Activated CD8-positive, alpha-beta T cell treated with anti-CD3 and anti-CD28 coated beads, Interleukin-2, amount 10 ng/mL, durations not matched to agents 7 days and 5 days (primary cell): ENCODE measurements at regions of chr18 and their contacts with region 1.

Region 1: GRCh38 chr18:3062798-3063680 is 50.1 kb upstream of the LPIN2 start:
- DNase-seq: peak; percentile 83
- ATAC-seq: peak; percentile 48
- H3K4me3 Mint-ChIP-seq: peak overlapping the region; percentile 17
- H3K27ac Mint-ChIP-seq: peak overlapping the region; percentile 95
- H3K4me1 Mint-ChIP-seq: peaks cover 67% of the 10 kb centered on the region
- H3K27me3 Mint-ChIP-seq: no peaks in the 10 kb centered on the region

Region 2: GRCh38 chr18:2923464-2923863 is 139.6 kb before region 1 on chr18:
- CTCF ChIA-PET with region 1: interaction called, 17 read pairs
- POLR2A ChIA-PET with region 1: no interaction called
- DNase-seq: no peak
- ATAC-seq: no peak
- H3K4me3 Mint-ChIP-seq: no peak overlapping the region
- H3K27ac Mint-ChIP-seq: no peak overlapping the region
- H3K4me1 Mint-ChIP-seq: no peaks in the 10 kb centered on the region
- H3K27me3 Mint-ChIP-seq: no peaks in the 10 kb centered on the region

Region 3: GRCh38 chr18:2958819-2959298 is 104.2 kb before region 1 on chr18:
- CTCF ChIA-PET with region 1: interaction called, 37 read pairs
- POLR2A ChIA-PET with region 1: interaction called, 3 read pairs
- DNase-seq: peak; percentile 78
- ATAC-seq: peak; percentile 56
- H3K4me3 Mint-ChIP-seq: peak overlapping the region; percentile 72
- H3K27ac Mint-ChIP-seq: peak overlapping the region; percentile 95
- H3K4me1 Mint-ChIP-seq: peaks cover 89% of the 10 kb centered on the region
- H3K27me3 Mint-ChIP-seq: no peaks in the 10 kb centered on the region

Region 4: GRCh38 chr18:2994603-2995432 is 68.2 kb before region 1 on chr18:
- CTCF ChIA-PET with region 1: interaction called, 311 read pairs
- POLR2A ChIA-PET with region 1: interaction called, 36 read pairs
- DNase-seq: peak; percentile 79
- ATAC-seq: peak; percentile 77
- H3K4me3 Mint-ChIP-seq: peak overlapping the region; percentile 46
- H3K27ac Mint-ChIP-seq: peak overlapping the region; percentile 57
- H3K4me1 Mint-ChIP-seq: peaks cover 77% of the 10 kb centered on the region
- H3K27me3 Mint-ChIP-seq: no peaks in the 10 kb centered on the region

Region 5: DNA sequence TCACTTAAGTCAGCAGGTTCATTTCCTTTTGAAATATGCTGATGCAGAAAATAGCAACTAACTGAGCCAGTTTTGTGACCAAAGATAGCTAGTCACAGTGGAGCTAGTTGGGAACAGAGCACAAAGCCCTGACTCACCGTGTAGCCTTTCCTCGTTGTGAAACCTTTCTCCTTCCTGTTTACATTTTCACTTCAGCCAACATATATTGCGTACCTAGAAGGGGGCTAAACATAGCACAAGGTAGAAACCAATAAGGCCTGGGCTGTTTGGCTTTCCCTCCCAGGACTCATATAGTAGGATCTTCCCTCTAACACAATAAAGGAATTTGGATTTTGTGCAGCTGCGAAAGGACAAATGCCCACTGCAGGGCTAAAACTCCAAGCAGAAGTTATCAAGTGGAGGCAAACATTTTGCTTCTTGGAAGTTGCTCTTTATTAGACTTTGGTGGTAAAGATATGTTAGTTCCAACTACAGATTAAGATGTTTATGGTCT is 25.6 kb before region 1 on chr18:
- CTCF ChIA-PET with region 1: interaction called, 36 read pairs
- POLR2A ChIA-PET with region 1: interaction called, 3 read pairs
- DNase-seq: peak; percentile 48
- ATAC-seq: peak; percentile 91
- H3K4me3 Mint-ChIP-seq: no peak overlapping the region
- H3K27ac Mint-ChIP-seq: peak overlapping the region; percentile 36
- H3K4me1 Mint-ChIP-seq: peaks cover 14% of the 10 kb centered on the region
- H3K27me3 Mint-ChIP-seq: no peaks in the 10 kb centered on the region

Region 6: DNA sequence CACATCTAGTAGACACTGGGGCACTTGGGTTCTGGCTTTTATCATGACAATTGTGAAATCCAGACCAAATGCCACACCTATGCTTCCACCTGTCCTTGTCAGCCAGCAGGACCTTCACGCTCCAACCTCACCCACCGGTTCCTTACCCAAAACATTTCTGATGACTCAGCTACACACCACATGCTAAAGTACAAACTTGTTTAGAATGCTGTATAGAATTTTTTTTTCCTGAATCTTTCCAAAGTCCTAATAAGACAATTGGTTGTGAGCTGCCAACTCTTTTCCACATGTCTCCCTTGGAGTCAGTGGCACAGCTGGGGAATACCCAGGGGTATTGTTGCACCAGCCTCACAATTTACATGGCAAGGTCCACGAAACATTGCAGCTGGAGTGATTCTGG is 25.4 kb after region 1 on chr18:
- CTCF ChIA-PET with region 1: interaction called, 27 read pairs
- POLR2A ChIA-PET with region 1: interaction called, 3 read pairs
- DNase-seq: no peak
- ATAC-seq: no peak
- H3K4me3 Mint-ChIP-seq: no peak overlapping the region
- H3K27ac Mint-ChIP-seq: no peak overlapping the region
- H3K4me1 Mint-ChIP-seq: peaks cover 17% of the 10 kb centered on the region
- H3K27me3 Mint-ChIP-seq: no peaks in the 10 kb centered on the region

Region 7: DNA sequence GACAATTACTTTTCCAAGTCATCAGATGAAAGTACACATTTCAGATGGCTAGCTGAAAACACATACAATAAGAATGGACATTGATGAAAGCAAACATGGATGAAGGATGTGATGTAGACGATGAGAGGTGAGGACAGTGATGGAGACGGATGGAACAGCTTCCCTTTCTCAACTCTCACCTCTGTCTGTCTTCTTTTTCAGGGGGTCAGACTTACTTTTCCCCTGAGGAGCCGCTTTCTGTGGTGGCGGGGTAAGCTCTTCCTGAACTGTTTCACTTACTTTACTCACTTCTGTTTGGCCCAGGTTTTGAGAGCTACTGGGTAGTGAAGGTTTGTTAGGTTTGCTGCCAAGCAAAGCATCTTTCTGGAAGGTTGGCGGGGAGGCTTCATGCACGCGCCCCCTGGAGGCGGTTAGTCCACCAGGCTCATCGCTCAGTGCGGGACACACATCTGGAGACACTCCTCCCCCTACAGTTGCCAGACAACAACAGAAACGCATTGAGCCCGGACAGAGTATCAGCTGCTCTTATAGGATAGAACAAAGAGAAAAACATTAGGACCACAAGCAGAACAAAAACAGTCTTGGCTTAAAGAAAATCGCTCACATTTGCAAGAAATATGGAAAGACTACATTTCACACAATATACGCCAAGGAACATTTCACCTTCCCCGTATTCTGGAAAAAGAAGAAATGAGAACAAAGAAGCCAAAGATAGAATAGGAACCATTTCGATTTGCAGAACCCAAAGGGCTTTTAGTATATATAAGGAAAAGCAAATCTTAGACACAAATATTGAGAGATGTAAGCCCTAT is 66.2 kb after region 1 on chr18:
- CTCF ChIA-PET with region 1: interaction called, 58 read pairs
- POLR2A ChIA-PET with region 1: no interaction called
- DNase-seq: peak; percentile 89
- ATAC-seq: peak; percentile 100
- H3K4me3 Mint-ChIP-seq: no peak overlapping the region
- H3K27ac Mint-ChIP-seq: no peak overlapping the region
- H3K4me1 Mint-ChIP-seq: peaks cover 10% of the 10 kb centered on the region
- H3K27me3 Mint-ChIP-seq: no peaks in the 10 kb centered on the region

Region 8: GRCh38 chr18:3207565-3207964 is 144.5 kb after region 1 on chr18:
- CTCF ChIA-PET with region 1: no interaction called
- POLR2A ChIA-PET with region 1: no interaction called
- DNase-seq: no peak
- ATAC-seq: no peak
- H3K4me3 Mint-ChIP-seq: no peak overlapping the region
- H3K27ac Mint-ChIP-seq: no peak overlapping the region
- H3K4me1 Mint-ChIP-seq: peaks cover 8% of the 10 kb centered on the region
- H3K27me3 Mint-ChIP-seq: no peaks in the 10 kb centered on the region